MCF 10A (cell line): ENCODE measurements at regions of chr6 and their contacts with region 1.

Region 1: GRCh38 chr6:117602151-117602898 is at the start of gene GOPC:
- DNase-seq: peak; percentile 99
- H3K4me3 Mint-ChIP-seq: peak within 1 kb of the TSS; percentile 95
- H3K27ac Mint-ChIP-seq: peak within 1 kb of the TSS; percentile 96
- H3K4me1 Mint-ChIP-seq: peaks cover 17% of the 10 kb centered on the region
- H3K27me3 Mint-ChIP-seq: no peaks in the 10 kb centered on the region
- CTCF ChIP-seq: no peak
- total RNA-seq, gene GOPC: 53.2 and 55.7 TPM in 2 replicates

Region 2: GRCh38 chr6:117118490-117118889 is 483.8 kb before region 1 on chr6:
- CTCF ChIA-PET with region 1: no interaction called
- POLR2A ChIA-PET with region 1: no interaction called
- intact Hi-C with region 1: no loop called
- DNase-seq: no peak
- H3K4me3 Mint-ChIP-seq: no peak overlapping the region
- H3K27ac Mint-ChIP-seq: no peak overlapping the region
- H3K4me1 Mint-ChIP-seq: no peaks in the 10 kb centered on the region
- H3K27me3 Mint-ChIP-seq: no peaks in the 10 kb centered on the region
- CTCF ChIP-seq: no peak

Region 3: GRCh38 chr6:117280922-117281321 is 321.4 kb before region 1 on chr6:
- CTCF ChIA-PET with region 1: interaction called, 6 read pairs
- POLR2A ChIA-PET with region 1: no interaction called
- intact Hi-C with region 1: loop called (anchors 1 kb)
- DNase-seq: peak; percentile 54
- H3K4me3 Mint-ChIP-seq: no peak overlapping the region
- H3K27ac Mint-ChIP-seq: no peak overlapping the region
- H3K4me1 Mint-ChIP-seq: no peaks in the 10 kb centered on the region
- H3K27me3 Mint-ChIP-seq: peaks cover 13% of the 10 kb centered on the region
- CTCF ChIP-seq: peak; percentile 13

Region 4: GRCh38 chr6:117399924-117400323 is 202.4 kb before region 1 on chr6:
- CTCF ChIA-PET with region 1: interaction called, 50 read pairs
- POLR2A ChIA-PET with region 1: interaction called, 4 read pairs
- intact Hi-C with region 1: loop called (anchors 2 kb)
- DNase-seq: peak; percentile 38
- H3K4me3 Mint-ChIP-seq: no peak overlapping the region
- H3K27ac Mint-ChIP-seq: no peak overlapping the region
- H3K4me1 Mint-ChIP-seq: peaks cover 7% of the 10 kb centered on the region
- H3K27me3 Mint-ChIP-seq: no peaks in the 10 kb centered on the region
- CTCF ChIP-seq: peak; percentile 27

Region 5: DNA sequence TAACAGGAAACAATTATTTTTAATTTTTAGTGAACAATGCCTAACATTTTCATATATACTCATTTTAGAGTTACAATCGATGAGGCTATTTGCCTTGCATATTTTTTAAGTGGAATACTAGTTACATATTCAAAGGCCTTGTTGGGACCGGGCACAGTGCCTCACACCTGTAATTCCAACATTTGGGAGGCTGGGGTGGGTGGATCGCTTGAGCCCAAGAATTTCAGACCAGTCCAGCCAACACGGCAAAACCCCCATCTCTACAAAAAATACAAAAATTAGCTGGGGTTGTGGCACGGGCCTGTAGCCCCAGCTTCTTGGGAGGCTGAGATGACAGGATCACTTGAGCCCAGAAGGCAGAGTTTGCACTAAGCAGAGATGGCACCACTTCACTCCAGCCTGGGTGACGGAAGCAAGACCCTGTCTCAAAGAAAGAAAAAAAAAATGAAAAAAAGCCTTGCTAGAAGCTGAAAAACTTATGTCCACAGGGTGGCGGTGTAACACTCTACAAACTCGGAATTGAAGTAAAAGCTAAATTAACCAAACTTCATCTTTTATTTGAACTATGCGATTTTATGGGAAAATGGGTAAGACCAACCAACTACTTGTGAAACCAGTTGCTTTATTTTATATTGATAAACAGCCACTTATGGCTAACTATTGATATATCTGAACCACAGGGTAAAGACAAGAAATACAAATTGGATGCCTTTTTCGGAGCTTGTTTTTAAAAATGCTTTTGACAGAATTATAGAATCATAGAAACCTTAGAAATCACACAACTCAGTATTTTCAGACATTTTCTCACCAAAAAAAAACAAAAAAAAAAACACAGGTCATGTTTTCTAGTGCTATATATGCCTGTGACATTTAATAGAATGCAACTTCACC is 152.5 kb before region 1 on chr6:
- CTCF ChIA-PET with region 1: interaction called, 49 read pairs
- POLR2A ChIA-PET with region 1: interaction called, 51 read pairs
- intact Hi-C with region 1: loop called (anchors 1 kb)
- DNase-seq: peak; percentile 78
- H3K4me3 Mint-ChIP-seq: no peak overlapping the region
- H3K27ac Mint-ChIP-seq: peak overlapping the region; percentile 82
- H3K4me1 Mint-ChIP-seq: peaks cover 43% of the 10 kb centered on the region
- H3K27me3 Mint-ChIP-seq: no peaks in the 10 kb centered on the region
- CTCF ChIP-seq: peak; percentile 65

Region 6: DNA sequence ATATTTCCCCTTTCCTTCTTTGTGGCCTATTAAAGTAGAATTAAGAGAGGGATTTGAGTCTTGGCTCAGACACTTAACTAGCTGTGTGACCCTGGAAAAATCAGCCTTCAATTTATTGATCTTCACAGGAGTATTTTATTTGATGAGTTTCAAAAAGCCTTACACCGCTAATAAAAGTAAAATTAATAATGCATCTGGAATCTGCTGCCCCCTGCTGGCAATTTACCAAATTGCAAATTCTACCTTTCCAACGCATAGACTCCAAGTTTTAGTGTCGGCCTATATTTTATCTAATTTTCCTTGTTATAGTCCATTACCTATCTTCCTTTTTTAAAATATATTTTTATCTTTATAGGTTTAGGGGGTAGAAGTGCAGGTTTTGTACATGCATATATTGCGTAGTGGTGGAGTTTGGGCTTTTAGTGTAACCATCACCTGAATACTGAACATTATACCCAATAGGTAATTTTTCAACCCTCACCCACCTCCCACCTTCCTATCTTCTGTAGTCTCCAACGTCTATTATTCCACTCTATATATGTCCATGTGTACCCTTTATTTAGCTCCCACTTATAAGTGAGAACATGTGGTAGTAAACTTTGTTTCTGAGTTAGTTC is 46.3 kb before region 1 on chr6:
- CTCF ChIA-PET with region 1: interaction called, 7 read pairs
- POLR2A ChIA-PET with region 1: interaction called, 20 read pairs
- intact Hi-C with region 1: loop called (anchors 5 kb)
- DNase-seq: peak; percentile 67
- H3K4me3 Mint-ChIP-seq: no peak overlapping the region
- H3K27ac Mint-ChIP-seq: no peak overlapping the region
- H3K4me1 Mint-ChIP-seq: peaks cover 22% of the 10 kb centered on the region
- H3K27me3 Mint-ChIP-seq: no peaks in the 10 kb centered on the region
- CTCF ChIP-seq: peak; percentile 75

Region 7: GRCh38 chr6:117629119-117629518 is 26.8 kb after region 1 on chr6:
- CTCF ChIA-PET with region 1: interaction called, 12 read pairs
- POLR2A ChIA-PET with region 1: no interaction called
- intact Hi-C with region 1: no loop called
- DNase-seq: no peak
- H3K4me3 Mint-ChIP-seq: no peak overlapping the region
- H3K27ac Mint-ChIP-seq: no peak overlapping the region
- H3K4me1 Mint-ChIP-seq: no peaks in the 10 kb centered on the region
- H3K27me3 Mint-ChIP-seq: no peaks in the 10 kb centered on the region
- CTCF ChIP-seq: no peak